ENCODE measurements at regions of chr9 and their contacts with region 1.

Region 1: DNA sequence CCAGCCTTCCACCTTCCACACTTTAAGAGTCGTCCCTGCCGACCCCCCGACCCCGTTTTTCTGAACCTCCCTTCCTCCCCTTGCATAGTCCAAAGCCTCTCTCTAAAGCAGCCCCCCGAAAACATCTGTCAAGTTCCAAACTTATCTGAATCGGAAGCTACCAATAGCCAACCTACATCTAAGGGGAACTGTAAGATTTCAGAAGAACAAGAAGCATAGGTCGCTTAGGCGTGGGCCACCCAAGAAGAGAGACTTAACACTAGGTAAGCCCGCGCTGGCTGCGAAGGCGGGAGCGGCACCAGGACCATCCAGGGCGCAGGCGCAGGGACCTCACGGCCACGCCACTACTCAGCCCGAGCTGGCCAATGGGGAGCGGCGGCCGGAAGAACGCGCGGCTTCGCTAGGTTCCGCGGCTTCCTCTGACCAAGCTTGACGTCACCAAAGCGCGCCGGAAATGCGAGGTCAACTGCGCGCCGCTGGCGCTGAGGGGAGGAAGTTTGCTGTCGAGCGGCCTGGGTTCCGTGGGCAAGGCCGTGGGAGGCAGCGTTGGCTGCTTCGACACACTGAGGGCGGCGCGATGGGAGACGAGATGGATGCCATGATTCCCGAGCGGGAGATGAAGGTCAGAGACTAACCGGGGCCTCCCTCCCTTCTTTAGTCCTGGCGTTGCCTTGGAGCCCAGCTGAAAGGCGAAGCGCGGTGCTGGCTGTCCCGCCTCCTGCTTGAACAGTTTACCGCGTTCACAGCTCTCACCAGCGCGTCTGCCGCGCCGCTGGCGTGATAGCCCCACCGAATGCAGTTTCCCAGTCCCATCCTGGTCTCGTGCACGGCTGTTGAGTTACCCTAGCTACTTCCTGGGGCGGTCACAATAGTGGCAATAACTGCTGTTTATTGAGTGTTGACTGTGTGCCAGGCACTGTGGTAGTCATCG is at the start of gene NUP214:
- DNase-seq: peak; percentile 100
- H3K4me3 Mint-ChIP-seq: peak within 1 kb of the TSS; percentile 99
- H3K27ac Mint-ChIP-seq: peak within 1 kb of the TSS; percentile 99
- H3K4me1 Mint-ChIP-seq: peaks cover 26% of the 10 kb centered on the region
- H3K27me3 Mint-ChIP-seq: peaks cover 2% of the 10 kb centered on the region
- total RNA-seq, gene NUP214: 77.7 and 79.2 TPM in 2 replicates

Region 2: GRCh38 chr9:130693426-130694191 is 431.8 kb before region 1 on chr9 and contains the start of gene EXOSC2:
- intact Hi-C with region 1: loop called (anchors 10 kb)
- DNase-seq: peak; percentile 97
- H3K4me3 Mint-ChIP-seq: peak within 1 kb of the TSS; percentile 89
- H3K27ac Mint-ChIP-seq: peak within 1 kb of the TSS; percentile 93
- H3K4me1 Mint-ChIP-seq: peaks cover 37% of the 10 kb centered on the region
- H3K27me3 Mint-ChIP-seq: no peaks in the 10 kb centered on the region
- total RNA-seq, gene EXOSC2: 109 and 110 TPM in 2 replicates

Region 3: DNA sequence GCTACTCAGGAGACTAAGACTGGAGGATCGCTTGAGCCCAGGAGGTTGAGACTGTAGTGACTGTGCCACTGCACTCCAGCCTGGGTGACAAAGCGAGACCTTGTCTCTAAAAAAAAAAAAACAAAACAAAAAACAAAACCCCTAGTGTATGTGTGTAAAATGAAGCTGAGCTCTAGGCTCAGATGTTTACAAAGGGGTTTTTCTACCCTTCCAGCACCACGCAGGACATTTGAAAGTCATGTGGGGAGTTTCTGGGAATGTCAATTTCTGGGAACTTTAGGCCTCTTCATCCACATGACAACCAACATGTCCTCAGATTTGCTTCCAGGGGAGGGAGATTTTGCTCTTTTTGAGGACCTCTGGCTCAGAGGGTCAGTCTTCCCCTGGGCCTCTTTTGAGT is 71.5 kb before region 1 on chr9:
- intact Hi-C with region 1: loop called (anchors 5 kb)
- DNase-seq: no peak
- H3K4me3 Mint-ChIP-seq: no peak overlapping the region
- H3K27ac Mint-ChIP-seq: no peak overlapping the region
- H3K4me1 Mint-ChIP-seq: no peaks in the 10 kb centered on the region
- H3K27me3 Mint-ChIP-seq: no peaks in the 10 kb centered on the region

Region 4: DNA sequence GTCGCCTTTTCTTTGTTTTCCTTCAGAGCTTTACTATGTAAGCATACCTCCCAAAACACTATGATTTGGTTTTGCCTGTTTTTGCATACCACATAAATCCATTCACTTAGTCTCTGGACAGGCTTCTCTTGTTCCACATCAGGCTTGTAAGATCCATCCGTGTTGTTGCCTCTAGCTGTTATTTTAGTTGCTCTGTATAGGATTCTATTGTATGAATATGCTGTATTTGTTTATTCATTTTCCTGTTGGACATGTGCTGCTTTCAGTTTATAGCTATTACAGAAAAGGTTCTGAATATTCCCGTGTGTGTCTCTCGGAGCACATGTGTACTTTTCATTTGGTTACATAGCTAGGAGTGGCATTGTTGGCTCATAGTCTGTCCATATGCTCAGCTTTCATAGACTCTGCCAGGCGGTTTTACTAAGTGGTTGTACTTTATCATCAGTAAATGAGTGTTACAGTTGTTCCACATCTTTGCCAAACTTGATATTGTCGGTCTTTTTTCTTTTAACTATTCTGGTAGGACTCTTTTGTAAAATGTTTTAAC is 41.8 kb after region 1 on chr9:
- intact Hi-C with region 1: no loop called
- DNase-seq: no peak
- H3K4me3 Mint-ChIP-seq: no peak overlapping the region
- H3K27ac Mint-ChIP-seq: no peak overlapping the region
- H3K4me1 Mint-ChIP-seq: peaks cover 11% of the 10 kb centered on the region
- H3K27me3 Mint-ChIP-seq: no peaks in the 10 kb centered on the region

Region 5: DNA sequence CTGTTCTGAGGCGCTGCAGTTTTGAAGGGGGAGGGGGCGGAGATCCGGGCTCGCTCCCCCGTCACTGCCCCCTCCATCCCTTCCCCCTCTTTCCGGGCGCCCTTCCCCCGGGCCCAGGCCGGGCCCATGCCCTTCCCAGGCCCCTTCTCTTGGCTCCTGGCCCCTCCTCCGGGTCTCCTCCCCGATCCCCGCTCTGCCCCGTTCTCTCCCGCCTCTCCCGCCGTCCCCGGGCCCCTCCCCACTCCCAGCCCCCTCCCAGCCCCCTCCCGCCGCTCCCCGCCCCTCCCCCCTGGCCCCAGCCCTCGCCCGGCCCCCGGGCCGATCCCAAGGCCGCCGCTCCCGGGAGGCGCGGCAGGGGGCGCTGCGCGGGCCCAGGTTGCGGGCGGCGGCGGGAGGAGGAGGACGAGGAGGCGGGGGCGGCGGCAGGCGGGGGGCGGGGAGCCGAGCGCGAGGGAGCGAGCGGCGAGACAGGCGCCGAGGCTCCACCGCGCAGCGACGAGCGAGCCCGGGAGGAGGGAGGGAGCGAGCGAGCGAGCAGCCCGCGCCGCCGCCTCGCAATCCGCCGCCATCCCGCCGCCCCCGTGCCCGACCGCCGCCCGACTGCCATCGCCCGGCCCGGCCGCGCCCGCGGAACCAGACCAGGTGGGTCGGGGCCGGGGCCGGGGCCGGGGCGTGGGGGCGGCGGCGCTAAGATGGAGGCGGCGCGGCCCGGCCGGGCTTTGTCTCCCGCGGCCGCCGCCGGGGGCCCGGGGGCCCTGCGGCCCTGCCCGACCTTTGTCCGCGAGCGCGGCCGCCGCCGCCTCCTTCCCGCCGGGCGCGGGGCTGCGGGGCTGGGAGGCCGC is 268.4 kb after region 1 on chr9 and contains the start of gene PRRC2B:
- intact Hi-C with region 1: loop called (anchors 2 kb)
- DNase-seq: peak; percentile 95
- H3K4me3 Mint-ChIP-seq: peak within 1 kb of the TSS; percentile 91
- H3K27ac Mint-ChIP-seq: peak within 1 kb of the TSS; percentile 94
- H3K4me1 Mint-ChIP-seq: peaks cover 39% of the 10 kb centered on the region
- H3K27me3 Mint-ChIP-seq: peaks cover 5% of the 10 kb centered on the region
- total RNA-seq, gene PRRC2B: 114 and 128 TPM in 2 replicates

Region 6: GRCh38 chr9:131530920-131531832 is 405.8 kb after region 1 on chr9 and contains the start of gene UCK1:
- intact Hi-C with region 1: loop called (anchors 1 kb)
- DNase-seq: peak; percentile 93
- H3K4me3 Mint-ChIP-seq: peak within 1 kb of the TSS; percentile 86
- H3K27ac Mint-ChIP-seq: peak within 1 kb of the TSS; percentile 79
- H3K4me1 Mint-ChIP-seq: peaks cover 15% of the 10 kb centered on the region
- H3K27me3 Mint-ChIP-seq: no peaks in the 10 kb centered on the region
- total RNA-seq, gene UCK1: 25.2 and 27.9 TPM in 2 replicates

Region 7: DNA sequence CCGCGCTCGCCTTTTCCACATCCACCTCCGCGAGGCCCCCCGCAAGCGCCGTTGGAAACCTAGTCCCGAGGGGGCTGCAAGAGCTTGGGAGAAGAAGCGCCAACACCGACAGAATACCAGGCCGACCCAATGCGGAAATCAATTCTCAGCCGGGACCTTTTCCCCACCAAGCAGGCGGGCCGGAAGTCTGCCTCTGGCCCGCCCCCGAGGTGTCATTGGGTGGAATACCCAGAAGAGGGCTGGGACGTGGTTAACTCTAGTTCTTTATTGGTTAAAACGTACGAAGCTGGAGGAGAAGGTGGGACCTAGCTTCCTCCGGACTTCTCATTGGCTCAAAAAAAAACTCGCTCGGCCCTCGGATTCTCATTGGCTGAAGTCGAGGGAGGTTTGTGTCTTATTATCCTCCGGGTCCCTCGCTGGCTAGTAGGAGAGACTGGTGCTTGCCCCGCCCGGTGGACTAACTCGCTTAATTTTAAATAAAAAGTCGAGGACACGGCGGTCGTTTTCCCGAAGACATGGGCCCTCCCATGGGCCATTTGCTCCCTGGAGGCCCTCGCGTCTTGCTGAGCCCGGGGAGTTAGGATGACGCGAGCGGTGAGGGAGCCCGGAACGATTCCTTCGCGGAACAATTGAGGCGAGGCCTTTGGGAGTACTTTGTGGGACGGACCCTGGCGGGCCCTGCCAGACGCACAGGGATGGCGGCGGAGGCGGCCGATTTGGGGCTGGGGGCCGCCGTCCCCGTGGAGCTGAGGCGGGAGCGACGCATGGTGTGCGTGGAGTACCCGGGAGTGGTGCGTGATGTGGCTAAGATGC is 1905.1 kb after region 1 on chr9 and contains the start of gene GTF3C5:
- intact Hi-C with region 1: loop called (anchors 5 kb)
- DNase-seq: peak; percentile 98
- H3K4me3 Mint-ChIP-seq: peak within 1 kb of the TSS; percentile 91
- H3K27ac Mint-ChIP-seq: peak within 1 kb of the TSS; percentile 95
- H3K4me1 Mint-ChIP-seq: peaks cover 32% of the 10 kb centered on the region
- H3K27me3 Mint-ChIP-seq: no peaks in the 10 kb centered on the region
- total RNA-seq, gene GTF3C5: 85.4 and 92.3 TPM in 2 replicates